HCT116 (cell line): ENCODE measurements at regions of chr2 and their contacts with region 1.

Region 1: GRCh38 chr2:218395797-218396687 is 3.6 kb upstream of the CTDSP1 start:
- DNase-seq: peak; percentile 96
- ATAC-seq: peak; percentile 61
- H3K4me3 ChIP-seq: peak overlapping the region; percentile 63 to 85
- H3K27ac ChIP-seq: peak overlapping the region; percentile 99
- H3K4me1 ChIP-seq: peaks cover 24 to 57% of the 10 kb centered on the region in 2 experiments
- H3K27me3 ChIP-seq: no peaks in the 10 kb centered on the region
- CTCF ChIP-seq: peak in 2 of 3 experiments; percentile 76 to 83; a peak in 4 of 6 replicates
- POLR2A ChIP-seq: peak; percentile 15
- RAD21 ChIP-seq: no peak

Region 2: GRCh38 chr2:218186355-218186766 is 209.7 kb before region 1 on chr2:
- CTCF ChIA-PET with region 1: interaction called, 3 read pairs
- POLR2A ChIA-PET with region 1: no interaction called
- RAD21 ChIA-PET with region 1: no interaction called
- intact Hi-C with region 1: loop called (anchors 1 kb)
- DNase-seq: peak; percentile 75
- ATAC-seq: peak; percentile 98
- H3K4me3 ChIP-seq: no peak overlapping the region
- H3K27ac ChIP-seq: no peak overlapping the region
- H3K4me1 ChIP-seq: peaks cover 0 to 8% of the 10 kb centered on the region in 2 experiments; a peak in 2 of 4 replicates
- H3K27me3 ChIP-seq: no peaks in the 10 kb centered on the region
- CTCF ChIP-seq: peak; percentile 79 to 83 (median 82)
- POLR2A ChIP-seq: no peak
- RAD21 ChIP-seq: peak; percentile 87

Region 3: GRCh38 chr2:218292048-218293014 is 103.7 kb before region 1 on chr2 and contains the start of gene TMBIM1:
- CTCF ChIA-PET with region 1: interaction called, 6 read pairs
- POLR2A ChIA-PET with region 1: interaction called, 9 read pairs
- RAD21 ChIA-PET with region 1: no interaction called
- intact Hi-C with region 1: loop called (anchors 2 kb)
- DNase-seq: no peak
- ATAC-seq: peak; percentile 89
- H3K4me3 ChIP-seq: peak within 1 kb of the TSS; percentile 75 to 96
- H3K27ac ChIP-seq: peak within 1 kb of the TSS; percentile 79
- H3K4me1 ChIP-seq: peaks cover 45 to 83% of the 10 kb centered on the region in 2 experiments
- H3K27me3 ChIP-seq: no peaks in the 10 kb centered on the region
- CTCF ChIP-seq: peak in 2 of 3 experiments; percentile 63 to 79; a peak in 4 of 6 replicates
- POLR2A ChIP-seq: peak; percentile 50
- RAD21 ChIP-seq: no peak
- total RNA-seq, gene TMBIM1: 91.0 TPM

Region 4: DNA sequence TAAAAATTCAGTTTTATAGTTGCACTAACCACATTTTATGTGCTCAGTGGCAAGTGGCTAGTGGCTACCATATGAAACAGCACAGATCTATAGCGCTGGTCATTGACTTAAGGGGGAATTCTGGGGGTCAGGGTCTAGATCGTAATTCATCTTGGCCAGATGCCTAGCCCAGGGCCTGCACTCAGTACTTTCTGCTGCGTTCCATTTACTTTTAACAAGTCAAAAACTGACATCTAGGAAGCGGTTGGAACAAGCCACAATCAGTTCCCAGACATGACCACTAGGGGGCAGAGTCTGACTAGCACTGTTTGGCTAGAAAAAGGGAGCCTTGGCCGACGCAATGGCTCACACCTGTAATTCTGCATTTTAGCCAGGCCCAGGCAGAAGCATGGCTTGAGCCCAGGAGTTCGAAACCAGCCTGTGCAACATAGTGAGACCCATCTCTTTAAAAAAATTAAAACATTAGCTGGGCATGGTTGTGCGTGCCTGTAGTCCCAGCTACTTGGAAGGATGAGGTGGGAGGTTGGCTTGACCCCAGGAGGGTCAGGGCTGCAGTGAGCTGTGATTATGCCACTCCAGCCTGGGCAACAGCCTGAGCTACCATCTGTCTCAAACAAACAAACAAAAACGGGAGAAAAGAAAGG is 94.7 kb before region 1 on chr2:
- CTCF ChIA-PET with region 1: interaction called, 5 read pairs
- POLR2A ChIA-PET with region 1: interaction called, 4 read pairs
- RAD21 ChIA-PET with region 1: interaction called in 1 of 2 experiments, 3 read pairs
- intact Hi-C with region 1: loop called (anchors 1 kb)
- DNase-seq: peak; percentile 91
- ATAC-seq: peak; percentile 83
- H3K4me3 ChIP-seq: no peak overlapping the region
- H3K27ac ChIP-seq: no peak overlapping the region
- H3K4me1 ChIP-seq: peaks cover 16 to 30% of the 10 kb centered on the region in 2 experiments
- H3K27me3 ChIP-seq: no peaks in the 10 kb centered on the region
- CTCF ChIP-seq: peak; percentile 93 to 98 (median 95)
- POLR2A ChIP-seq: no peak
- RAD21 ChIP-seq: peak; percentile 98

Region 5: DNA sequence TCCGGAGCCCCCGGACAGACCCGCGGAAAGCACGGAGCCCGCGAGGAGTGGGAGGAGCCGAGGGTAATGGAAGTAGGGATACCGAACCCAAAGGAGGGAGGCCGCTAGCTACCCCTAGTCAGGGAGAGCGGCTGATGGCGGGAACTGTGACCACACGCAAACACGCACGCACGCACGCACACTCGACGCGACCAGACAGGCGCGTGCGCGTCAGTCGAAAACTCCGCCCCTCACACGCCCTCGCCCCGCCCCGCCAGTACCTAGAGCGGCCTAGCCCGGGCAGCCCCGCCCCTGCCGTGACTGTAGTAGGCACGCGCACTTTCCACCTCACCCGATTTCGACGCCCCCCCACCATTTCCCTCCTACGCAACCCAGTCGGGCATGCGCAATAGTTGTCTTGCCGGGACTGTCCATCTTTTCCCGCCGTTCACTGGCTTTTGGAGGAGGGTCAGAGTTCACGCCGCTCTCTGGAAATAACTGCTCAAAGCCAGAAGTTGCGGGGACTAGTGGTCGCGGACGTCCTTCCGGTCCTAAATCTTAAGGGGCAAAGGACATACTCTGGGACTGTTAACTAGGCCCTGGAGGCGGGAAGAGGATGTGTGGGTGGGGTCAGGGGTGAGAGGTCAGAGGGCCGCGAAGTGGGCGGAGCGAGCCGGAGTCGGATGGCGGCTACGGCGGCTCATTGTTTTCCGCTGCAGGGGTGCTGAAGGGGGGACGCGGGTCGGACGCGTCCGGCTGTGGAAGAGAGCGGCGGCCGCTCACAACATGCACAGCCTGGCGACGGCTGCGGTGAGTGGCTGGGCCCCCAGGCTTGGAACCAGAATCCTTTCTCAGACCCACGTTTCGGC is 172.4 kb after region 1 on chr2 and contains the starts of genes CNOT9 and USP37:
- CTCF ChIA-PET with region 1: no interaction called
- POLR2A ChIA-PET with region 1: no interaction called
- RAD21 ChIA-PET with region 1: no interaction called
- intact Hi-C with region 1: loop called (anchors 2 kb)
- DNase-seq: peak; percentile 94
- ATAC-seq: peak; percentile 91
- H3K4me3 ChIP-seq: peak within 1 kb of the TSS; percentile 59 to 85
- H3K27ac ChIP-seq: peak within 1 kb of the TSS; percentile 88
- H3K4me1 ChIP-seq: peaks cover 15 to 27% of the 10 kb centered on the region in 2 experiments
- H3K27me3 ChIP-seq: no peaks in the 10 kb centered on the region
- CTCF ChIP-seq: no peak
- POLR2A ChIP-seq: peak; percentile 58
- RAD21 ChIP-seq: no peak
- total RNA-seq, gene CNOT9: 65.7 TPM
- total RNA-seq, gene USP37: 23.5 TPM